ENCODE measurements at regions of chr2 and their contacts with region 1.

Region 1: DNA sequence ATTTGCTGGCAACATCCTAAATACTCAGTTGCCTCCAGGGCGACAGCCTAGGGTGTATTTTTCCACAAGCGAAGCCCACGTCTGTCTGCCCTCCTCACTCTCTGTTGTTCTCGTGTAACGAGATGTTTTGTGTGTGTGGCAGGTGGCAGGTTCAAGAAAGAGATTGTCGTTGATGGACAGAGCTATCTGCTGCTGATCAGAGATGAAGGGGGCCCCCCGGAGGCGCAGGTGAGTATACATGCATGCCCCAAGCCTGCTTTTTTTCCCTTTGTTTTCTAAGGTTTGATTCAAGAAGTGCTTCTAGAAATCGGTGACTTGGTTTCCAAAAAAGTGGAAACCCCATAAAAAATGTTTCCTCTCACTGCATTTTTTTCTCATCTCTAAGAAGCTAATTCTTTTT is 247.0 kb downstream of the AGAP1 start:
- DNase-seq: no peak
- H3K4me3 ChIP-seq: no peak overlapping the region
- H3K27ac ChIP-seq: no peak overlapping the region
- H3K4me1 ChIP-seq: no peaks in the 10 kb centered on the region
- H3K27me3 ChIP-seq: no peaks in the 10 kb centered on the region
- CTCF ChIP-seq: no peak
- POLR2A ChIP-seq: no peak

Region 2: GRCh38 chr2:235669983-235670962 is 70.5 kb before region 1 on chr2:
- intact Hi-C with region 1: loop called (anchors 5 kb)
- DNase-seq: no peak
- H3K4me3 ChIP-seq: peak overlapping the region; percentile 47 to 52
- H3K27ac ChIP-seq: peak overlapping the region; percentile 48
- H3K4me1 ChIP-seq: peaks cover 31% of the 10 kb centered on the region
- H3K27me3 ChIP-seq: no peaks in the 10 kb centered on the region
- CTCF ChIP-seq: no peak
- POLR2A ChIP-seq: no peak

Measured in vagina (tissue), 2 donors.